Left colon (tissue), 2 donors: ENCODE measurements at regions of chr7 and their contacts with region 1.

Region 1: GRCh38 chr7:25886387-25887240 is 265.4 kb upstream of the NFE2L3 start:
- DNase-seq: no peak
- ATAC-seq: no peak

Region 2: DNA sequence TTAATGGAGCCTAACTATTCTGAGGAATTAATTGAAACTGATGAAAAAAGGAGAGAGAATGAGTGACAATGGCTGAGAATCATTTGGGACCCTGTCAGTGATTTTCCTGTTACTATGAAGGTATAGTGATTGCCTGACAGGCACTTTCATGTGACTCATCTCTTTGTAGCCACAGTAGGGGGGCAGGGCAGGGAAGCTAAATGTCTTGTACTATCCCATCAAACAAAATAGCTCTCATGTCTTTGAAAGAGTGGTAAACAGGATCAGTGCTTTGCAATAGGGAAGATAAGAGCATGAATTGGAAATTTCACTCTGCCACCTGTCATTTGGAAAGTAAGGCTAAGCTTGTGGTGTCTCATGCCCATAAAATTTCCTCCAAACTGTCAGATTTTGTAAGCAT is 1034.8 kb before region 1 on chr7:
- intact Hi-C with region 1: no loop called
- DNase-seq: no peak
- ATAC-seq: no peak

Region 3: GRCh38 chr7:25758559-25758958 is 128.1 kb before region 1 on chr7:
- intact Hi-C with region 1: no loop called
- DNase-seq: no peak
- ATAC-seq: no peak

Region 4: DNA sequence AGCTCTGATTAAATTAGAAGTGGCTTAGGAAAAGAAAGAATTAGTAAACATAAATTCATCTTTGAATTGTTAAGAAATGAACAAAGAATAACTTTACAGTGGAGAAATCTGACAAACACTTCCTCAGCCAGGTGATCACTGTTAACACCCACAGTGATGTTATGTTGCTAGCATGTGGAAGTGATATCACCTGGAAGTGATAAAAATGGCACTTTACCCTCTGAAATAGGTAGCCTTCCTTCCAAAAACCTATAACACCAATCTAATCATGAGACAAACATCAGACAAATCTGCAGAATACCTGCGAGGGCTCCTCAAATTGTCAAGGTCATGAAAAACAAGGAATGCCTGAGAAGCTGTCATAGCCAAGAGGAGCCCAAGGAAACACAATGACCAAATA is 464.6 kb after region 1 on chr7:
- intact Hi-C with region 1: loop called in 1 of 2 experiments (anchors 5 kb)
- DNase-seq: no peak
- ATAC-seq: no peak